HEK293 (cell line): ENCODE measurements at regions of chr17 and their contacts with region 1.

Region 1: GRCh38 chr17:32783602-32784001 is 93.3 kb downstream of the MYO1D start:
- H3K4me3 ChIP-seq: no peak overlapping the region
- H3K27ac ChIP-seq: no peak overlapping the region
- H3K4me1 ChIP-seq: no peaks in the 10 kb centered on the region
- CTCF ChIP-seq: no peak

Region 2: DNA sequence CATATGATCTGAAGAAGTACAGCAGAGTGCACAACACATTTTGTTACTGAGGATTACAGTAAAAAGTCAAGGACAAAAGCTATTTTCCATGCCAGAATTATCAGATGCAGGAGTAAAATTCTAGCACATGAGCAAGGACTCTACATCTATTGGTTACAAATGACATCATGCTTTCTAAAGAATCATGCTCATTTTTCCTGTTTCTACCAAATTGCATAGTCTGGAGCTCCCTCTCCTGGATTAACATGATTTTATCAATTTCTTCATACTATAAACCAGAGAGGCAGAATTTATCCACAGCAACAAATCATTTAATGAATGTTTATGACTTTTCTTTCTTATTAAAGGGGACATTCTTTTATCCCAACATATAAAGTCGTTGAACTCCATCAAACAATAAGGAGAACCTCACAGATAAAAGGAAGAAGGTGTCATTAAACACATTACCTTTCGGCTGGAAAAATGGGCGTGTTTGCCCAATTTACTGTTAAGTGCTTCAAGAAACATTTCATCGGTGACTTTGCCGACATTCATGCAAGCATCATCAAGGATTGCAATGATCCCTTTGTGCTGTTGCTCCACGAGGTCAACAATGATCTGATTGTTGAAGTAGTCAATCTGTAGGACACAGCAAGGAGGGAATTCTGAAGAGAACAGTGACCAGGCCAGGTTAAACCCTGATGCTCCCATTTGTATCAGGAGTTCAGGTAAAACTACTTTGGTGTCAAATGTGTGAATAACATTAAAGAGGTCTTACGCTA is 28.4 kb before region 1 on chr17:
- CTCF ChIA-PET with region 1: interaction called, 12 read pairs
- POLR2A ChIA-PET with region 1: no interaction called
- H3K4me3 ChIP-seq: no peak overlapping the region
- H3K27ac ChIP-seq: no peak overlapping the region
- H3K4me1 ChIP-seq: no peaks in the 10 kb centered on the region
- CTCF ChIP-seq: peak; percentile 26; the same call in 1 of the 2 replicates

Region 3: DNA sequence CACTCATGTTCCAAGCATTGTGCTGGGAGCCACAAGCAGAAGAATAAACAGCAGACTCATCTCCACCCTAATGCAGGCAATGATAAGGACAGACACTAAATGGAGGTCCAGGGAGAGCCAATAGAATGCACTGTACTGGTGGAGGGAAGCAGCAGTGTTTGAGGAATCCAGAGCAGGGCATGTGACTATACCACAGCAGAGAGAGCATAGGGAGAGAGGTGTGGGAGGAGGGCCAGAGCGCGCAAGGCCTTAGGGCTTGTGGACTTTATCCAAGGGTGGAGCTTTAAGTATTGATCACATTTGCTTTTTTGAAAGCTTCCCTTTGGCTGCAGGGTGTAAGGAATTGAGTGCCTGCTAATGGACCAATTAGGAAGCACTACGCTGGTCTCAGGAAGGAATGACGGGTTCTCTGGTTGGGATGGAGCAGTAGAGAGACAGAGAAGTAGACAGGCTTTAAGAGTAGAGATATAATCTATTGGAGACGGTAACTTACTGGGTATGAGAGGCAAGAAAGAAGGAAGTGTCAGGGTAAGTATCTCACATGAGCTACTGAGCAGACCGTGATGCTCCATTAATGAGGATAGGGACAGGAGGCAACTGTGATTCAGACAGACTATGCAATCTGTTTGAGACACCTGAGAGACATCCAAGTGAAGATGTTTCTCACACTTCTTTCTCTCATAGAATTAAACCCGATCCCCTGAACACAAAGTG is 11.1 kb after region 1 on chr17:
- CTCF ChIA-PET with region 1: interaction called, 96 read pairs
- POLR2A ChIA-PET with region 1: no interaction called
- H3K4me3 ChIP-seq: no peak overlapping the region
- H3K27ac ChIP-seq: no peak overlapping the region
- H3K4me1 ChIP-seq: no peaks in the 10 kb centered on the region
- CTCF ChIP-seq: no peak

Region 4: GRCh38 chr17:32882734-32883133 is 99.1 kb after region 1 on chr17:
- CTCF ChIA-PET with region 1: interaction called, 211 read pairs
- POLR2A ChIA-PET with region 1: interaction called, 4 read pairs
- H3K4me3 ChIP-seq: no peak overlapping the region
- H3K27ac ChIP-seq: no peak overlapping the region
- H3K4me1 ChIP-seq: peaks cover 2% of the 10 kb centered on the region; the same call in 1 of the 2 replicates
- CTCF ChIP-seq: no peak

Region 5: GRCh38 chr17:32936894-32937500 is 153.4 kb after region 1 on chr17:
- CTCF ChIA-PET with region 1: interaction called, 39 read pairs
- POLR2A ChIA-PET with region 1: no interaction called
- H3K4me3 ChIP-seq: no peak overlapping the region
- H3K27ac ChIP-seq: no peak overlapping the region
- H3K4me1 ChIP-seq: no peaks in the 10 kb centered on the region
- CTCF ChIP-seq: peak; percentile 57